Activated CD4-positive, alpha-beta T cell treated with anti-CD3 and anti-CD28 coated beads, Interleukin-2, amount 10 ng/mL, durations not matched to agents 24 days and 14 days (primary cell): ENCODE measurements at regions of chr2 and their contacts with region 1.

Region 1: DNA sequence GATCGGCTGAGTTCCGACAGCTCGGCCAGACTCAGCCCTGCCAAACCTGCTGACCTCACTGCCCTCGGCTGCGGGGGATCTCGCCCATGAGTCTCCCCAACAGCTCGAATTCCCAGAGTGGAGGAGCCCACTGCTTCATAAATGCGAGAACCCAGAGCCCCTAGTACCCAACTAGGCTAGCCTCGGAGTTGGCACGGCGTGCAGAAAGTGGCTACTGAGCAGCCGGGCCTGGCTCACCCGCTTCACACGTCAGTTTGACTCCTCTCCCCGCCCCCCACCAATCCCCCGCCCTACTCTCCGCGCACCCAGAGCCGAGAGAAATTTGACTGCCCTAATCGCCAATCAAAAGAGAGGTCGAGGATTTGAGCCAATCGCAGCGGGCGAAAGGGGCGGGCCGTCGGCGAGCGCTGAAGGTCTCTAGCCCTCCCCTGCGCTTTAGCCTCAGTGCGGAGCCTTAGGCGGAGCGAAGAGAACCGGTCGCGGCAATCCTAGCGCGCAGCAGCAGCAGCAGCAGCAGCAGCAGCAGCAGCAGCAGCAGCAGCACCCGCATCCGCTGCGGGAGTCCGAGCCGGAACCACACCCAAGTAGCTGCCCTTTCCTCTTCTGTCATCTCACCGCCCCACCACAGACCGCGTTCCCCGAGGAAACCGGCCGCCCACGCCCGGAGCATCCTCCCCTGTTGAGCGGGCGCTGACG is at the start of gene GLS:
- DNase-seq: peak; percentile 98
- H3K4me3 Mint-ChIP-seq: peak within 1 kb of the TSS; percentile 94
- H3K27ac Mint-ChIP-seq: peak within 1 kb of the TSS; percentile 97
- H3K4me1 Mint-ChIP-seq: peaks cover 35% of the 10 kb centered on the region
- H3K27me3 Mint-ChIP-seq: peaks cover 2% of the 10 kb centered on the region
- total RNA-seq, gene GLS: 256 and 266 TPM in 2 replicates

Region 2: DNA sequence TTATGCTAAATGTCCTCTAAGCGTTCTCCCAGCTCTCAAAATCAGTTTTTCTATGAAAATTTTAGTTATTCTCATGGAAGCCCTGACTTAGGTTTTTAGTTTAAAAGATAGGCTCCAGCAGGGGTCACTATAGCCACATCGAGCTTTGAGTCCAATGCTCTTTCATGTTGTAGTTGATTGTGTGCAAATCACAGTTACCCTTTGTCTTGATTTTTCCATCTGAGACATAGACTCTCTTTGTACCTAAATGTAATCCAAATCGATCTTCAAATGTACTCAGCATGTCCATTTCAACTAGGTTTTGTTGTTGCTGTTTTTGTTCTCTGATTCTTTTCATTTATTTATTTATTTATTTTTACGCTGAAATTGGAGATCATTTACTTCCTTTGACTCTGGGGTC is 791.6 kb before region 1 on chr2:
- intact Hi-C with region 1: no loop called
- DNase-seq: peak; percentile 84
- H3K4me3 Mint-ChIP-seq: no peak overlapping the region
- H3K27ac Mint-ChIP-seq: no peak overlapping the region
- H3K4me1 Mint-ChIP-seq: no peaks in the 10 kb centered on the region
- H3K27me3 Mint-ChIP-seq: peaks cover 5% of the 10 kb centered on the region

Region 3: GRCh38 chr2:190408538-190409271 is 471.8 kb before region 1 on chr2:
- intact Hi-C with region 1: loop called (anchors 2 kb)
- DNase-seq: peak; percentile 91
- H3K4me3 Mint-ChIP-seq: peak overlapping the region; percentile 87
- H3K27ac Mint-ChIP-seq: peak overlapping the region; percentile 94
- H3K4me1 Mint-ChIP-seq: peaks cover 41% of the 10 kb centered on the region
- H3K27me3 Mint-ChIP-seq: no peaks in the 10 kb centered on the region

Region 4: DNA sequence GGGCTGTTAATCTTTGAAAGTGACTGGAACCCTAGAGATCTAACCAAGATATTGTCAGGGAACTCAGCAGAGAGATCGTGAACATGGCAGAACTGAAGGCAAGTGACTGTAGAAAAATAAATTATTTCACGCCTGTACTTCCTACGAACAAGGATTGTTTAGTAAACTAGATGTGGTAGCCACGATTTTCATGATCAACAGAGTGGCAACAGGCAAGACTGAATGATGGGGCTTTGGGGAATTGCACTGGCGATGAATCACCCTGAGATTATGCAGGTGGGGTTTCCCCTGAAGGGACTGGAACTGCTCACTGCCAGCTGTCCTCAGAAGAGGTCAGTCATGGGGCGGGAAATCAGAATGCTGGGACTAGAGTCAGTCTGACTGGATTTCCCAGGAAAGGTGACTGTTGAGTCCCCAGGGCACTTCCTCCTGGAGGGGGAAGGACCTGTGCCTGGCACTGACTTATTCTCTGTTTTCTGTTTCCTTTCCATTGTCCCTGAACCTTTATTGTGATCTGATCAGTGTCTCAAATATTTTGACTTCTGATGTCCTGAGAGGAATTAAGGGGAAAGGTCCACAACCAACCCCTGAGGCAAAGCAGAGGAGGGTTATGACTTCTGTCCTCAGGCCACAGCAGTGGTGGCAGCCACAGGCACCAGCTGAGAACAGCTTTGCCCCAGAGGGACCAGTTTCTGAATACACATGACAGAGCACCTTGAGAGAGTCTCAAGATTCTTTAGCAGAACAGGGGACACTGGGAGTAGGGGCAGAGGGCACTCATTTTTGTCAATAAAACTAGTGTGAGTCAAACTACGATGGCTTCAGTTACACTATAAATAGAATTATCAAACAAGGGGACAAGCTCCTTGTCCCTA is 161.6 kb before region 1 on chr2:
- intact Hi-C with region 1: loop called (anchors 1 kb)
- DNase-seq: peak; percentile 73
- H3K4me3 Mint-ChIP-seq: peak overlapping the region; percentile 64
- H3K27ac Mint-ChIP-seq: peak overlapping the region; percentile 96
- H3K4me1 Mint-ChIP-seq: peaks cover 53% of the 10 kb centered on the region
- H3K27me3 Mint-ChIP-seq: no peaks in the 10 kb centered on the region

Region 5: DNA sequence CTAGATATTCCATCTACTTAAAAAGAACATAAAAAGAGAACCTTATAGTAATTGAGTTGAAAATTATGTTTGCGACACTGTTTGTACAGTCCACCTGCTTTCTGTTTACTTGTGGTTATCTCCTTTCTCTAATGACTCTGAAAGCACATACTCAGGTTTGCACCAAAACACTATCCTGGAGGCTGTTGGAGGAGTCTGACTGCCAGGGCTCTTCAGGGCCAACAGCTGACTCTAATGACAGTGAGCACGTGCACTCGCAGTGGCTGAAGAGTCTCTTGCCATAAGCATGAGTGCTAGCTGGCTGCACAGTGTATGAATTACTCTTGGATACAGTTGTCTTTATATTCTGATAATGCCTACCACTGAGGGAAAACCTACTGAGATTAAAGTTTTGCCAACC is 16.6 kb before region 1 on chr2:
- intact Hi-C with region 1: loop called (anchors 2 kb)
- DNase-seq: no peak
- H3K4me3 Mint-ChIP-seq: no peak overlapping the region
- H3K27ac Mint-ChIP-seq: no peak overlapping the region
- H3K4me1 Mint-ChIP-seq: peaks cover 5% of the 10 kb centered on the region
- H3K27me3 Mint-ChIP-seq: peaks cover 2% of the 10 kb centered on the region

Region 6: DNA sequence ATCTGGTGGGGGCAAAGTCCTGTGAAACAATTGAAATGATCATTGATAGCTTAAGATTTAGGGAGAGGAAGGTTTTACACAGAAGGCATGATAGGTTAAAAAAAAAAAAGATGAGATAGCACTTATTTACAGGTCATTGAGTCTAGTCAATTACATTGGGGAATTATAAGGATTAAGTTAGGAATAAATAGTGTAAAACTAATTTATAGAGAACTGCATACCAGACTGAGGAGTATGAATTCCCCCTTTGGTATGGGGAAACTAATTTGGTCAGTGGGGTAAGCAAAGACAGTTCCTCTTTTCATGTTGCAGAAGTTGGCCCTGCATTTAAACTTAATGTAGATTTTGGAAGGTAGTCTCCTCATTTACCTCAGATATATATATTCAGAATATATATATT is 10.8 kb after region 1 on chr2:
- intact Hi-C with region 1: no loop called
- DNase-seq: no peak
- H3K4me3 Mint-ChIP-seq: peak overlapping the region; percentile 9
- H3K27ac Mint-ChIP-seq: no peak overlapping the region
- H3K4me1 Mint-ChIP-seq: peaks cover 54% of the 10 kb centered on the region
- H3K27me3 Mint-ChIP-seq: no peaks in the 10 kb centered on the region

Region 7: DNA sequence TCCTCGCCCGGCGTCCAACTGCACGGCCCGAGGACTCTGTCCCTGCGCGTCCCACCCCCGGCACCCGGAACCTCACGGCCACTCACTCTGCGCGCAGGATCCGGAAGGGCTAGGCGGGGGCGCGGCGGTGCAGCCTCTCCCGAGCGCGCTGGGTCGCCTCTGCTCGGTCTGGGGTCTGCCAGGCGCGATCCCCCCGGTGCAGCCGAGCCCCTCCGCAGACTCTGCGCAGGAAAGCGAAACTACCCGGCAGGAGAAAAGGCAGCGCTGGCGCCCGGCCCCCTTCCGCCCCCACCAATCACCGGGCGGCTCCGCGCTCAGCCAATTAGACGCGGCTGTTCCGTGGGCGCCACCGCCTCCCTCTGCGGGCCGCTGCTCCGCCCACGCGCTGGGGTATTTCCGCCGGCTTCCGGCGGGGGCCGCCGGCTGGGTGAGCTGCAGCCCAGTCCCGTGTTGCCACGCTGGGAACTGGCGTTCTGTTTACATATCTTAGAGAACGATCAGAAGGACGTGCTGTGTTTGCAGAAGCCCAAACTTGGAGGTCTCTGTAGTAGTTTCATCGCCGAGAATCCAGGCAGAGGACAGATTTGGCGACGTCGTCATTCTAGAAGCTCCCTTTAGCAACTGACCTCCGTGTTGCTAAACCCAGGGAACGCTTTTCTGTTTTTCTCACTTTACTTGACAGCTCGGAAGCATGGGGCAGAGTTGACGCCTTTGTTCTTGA is 133.6 kb after region 1 on chr2 and contains the start of gene STAT1:
- intact Hi-C with region 1: loop called (anchors 1 kb)
- DNase-seq: peak; percentile 100
- H3K4me3 Mint-ChIP-seq: no peak within 1 kb of the TSS
- H3K27ac Mint-ChIP-seq: no peak within 1 kb of the TSS
- H3K4me1 Mint-ChIP-seq: peaks cover 37% of the 10 kb centered on the region
- H3K27me3 Mint-ChIP-seq: no peaks in the 10 kb centered on the region
- total RNA-seq, gene STAT1: 152 and 160 TPM in 2 replicates

Region 8: GRCh38 chr2:191189112-191189635 is 308.6 kb after region 1 on chr2:
- intact Hi-C with region 1: loop called (anchors 5 kb)
- DNase-seq: peak; percentile 56
- H3K4me3 Mint-ChIP-seq: peak overlapping the region; percentile 62
- H3K27ac Mint-ChIP-seq: peak overlapping the region; percentile 41
- H3K4me1 Mint-ChIP-seq: peaks cover 39% of the 10 kb centered on the region
- H3K27me3 Mint-ChIP-seq: no peaks in the 10 kb centered on the region